ENCODE measurements at regions of chr9 and their contacts with region 1.

Region 1: DNA sequence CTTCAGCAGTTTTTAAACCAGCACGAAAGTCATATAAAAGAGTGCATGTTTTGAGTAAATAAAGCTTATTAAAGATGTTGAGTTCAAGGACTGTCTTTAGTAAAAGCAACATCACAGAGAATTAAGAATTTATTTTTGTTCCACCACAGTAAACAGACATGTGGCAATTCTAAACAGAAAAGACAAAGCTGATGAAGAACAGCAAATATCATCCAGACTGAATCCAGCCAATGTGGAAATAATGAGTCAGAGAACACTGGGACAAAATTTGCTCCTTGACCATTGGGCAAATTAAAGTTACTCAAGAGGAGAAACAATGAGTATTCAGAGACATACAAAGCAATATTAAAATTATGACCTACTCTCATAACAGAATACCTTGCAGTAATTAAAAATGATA is 28.8 kb downstream of the OR2K2 start:
- DNase-seq: no peak
- H3K4me3 ChIP-seq: no peak overlapping the region
- H3K27ac ChIP-seq: no peak overlapping the region
- H3K4me1 ChIP-seq: no peaks in the 10 kb centered on the region
- H3K27me3 ChIP-seq: no peaks in the 10 kb centered on the region
- CTCF ChIP-seq: no peak
- POLR2A ChIP-seq: no peak

Region 2: GRCh38 chr9:110638381-110638954 is 662.7 kb before region 1 on chr9:
- intact Hi-C with region 1: loop called (anchors 5 kb)
- DNase-seq: no peak
- H3K4me3 ChIP-seq: no peak overlapping the region
- H3K27ac ChIP-seq: no peak overlapping the region
- H3K4me1 ChIP-seq: no peaks in the 10 kb centered on the region
- H3K27me3 ChIP-seq: no peaks in the 10 kb centered on the region
- CTCF ChIP-seq: peak in 5 of 6 experiments; percentile 15 to 68 (median 50)
- POLR2A ChIP-seq: no peak